B cell (primary cell): ENCODE measurements at regions of chr18 and their contacts with region 1.

Region 1: GRCh38 chr18:74342416-74343043 is 26.9 kb downstream of the C18orf63 start:
- DNase-seq: peak; percentile 72
- ATAC-seq: no peak
- H3K4me3 ChIP-seq: no peak overlapping the region
- H3K4me3 Mint-ChIP-seq: no peak overlapping the region
- H3K27ac ChIP-seq: no peak overlapping the region
- H3K27ac Mint-ChIP-seq: peak overlapping the region; percentile 64
- H3K4me1 ChIP-seq: peaks cover 0 to 8% of the 10 kb centered on the region in 2 donors
- H3K4me1 Mint-ChIP-seq: peaks cover 22% of the 10 kb centered on the region
- H3K27me3 ChIP-seq: no peaks in the 10 kb centered on the region
- H3K27me3 Mint-ChIP-seq: no peaks in the 10 kb centered on the region
- CTCF ChIP-seq: peak; percentile 93

Region 2: DNA sequence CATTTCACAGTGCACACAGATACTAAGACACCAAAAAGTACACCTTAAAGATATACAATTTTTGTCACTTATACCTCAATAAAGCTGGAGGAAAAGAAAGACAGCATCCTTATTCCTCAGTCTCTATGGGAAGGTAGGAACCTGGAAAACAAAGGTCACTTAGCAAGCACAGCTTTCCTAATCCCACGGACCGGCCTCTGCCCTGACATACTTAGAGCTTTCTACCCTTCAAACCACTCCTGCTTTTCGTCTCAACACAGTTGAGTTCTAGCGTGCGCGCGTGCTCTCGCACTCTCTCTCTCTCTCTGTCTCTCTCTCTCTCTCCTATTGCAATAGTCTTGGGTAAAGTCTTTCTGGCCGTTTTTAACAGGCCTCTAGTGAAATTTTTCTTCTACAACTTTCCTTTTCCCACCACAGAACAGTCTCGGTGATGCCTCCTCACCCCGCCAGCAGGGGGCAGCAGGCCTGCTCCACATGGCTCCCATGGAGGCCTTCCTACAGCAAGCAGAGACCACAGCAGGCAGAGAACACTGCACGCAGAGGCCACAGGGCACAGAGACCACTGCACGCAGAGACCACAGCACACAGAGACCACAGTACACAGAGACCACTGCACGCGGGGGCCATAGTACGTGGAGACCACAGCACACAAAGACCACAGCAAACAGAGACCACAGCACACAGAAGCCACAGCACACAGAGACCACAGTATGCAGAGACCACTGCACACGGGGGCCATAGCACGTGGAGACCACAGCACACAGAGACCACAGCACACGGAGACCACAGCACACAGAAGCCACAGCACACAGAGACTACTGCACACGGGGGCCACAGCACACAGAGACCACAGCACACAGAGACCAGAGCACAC is 301.8 kb before region 1 on chr18:
- CTCF ChIA-PET with region 1: interaction called, 11 read pairs
- POLR2A ChIA-PET with region 1: no interaction called
- intact Hi-C with region 1: loop called (anchors 1 kb)
- DNase-seq: peak; percentile 62
- ATAC-seq: peak; percentile 79
- H3K4me3 ChIP-seq: no peak overlapping the region
- H3K4me3 Mint-ChIP-seq: no peak overlapping the region
- H3K27ac ChIP-seq: no peak overlapping the region
- H3K27ac Mint-ChIP-seq: no peak overlapping the region
- H3K4me1 ChIP-seq: peaks cover 18% of the 10 kb centered on the region in 2 donors
- H3K4me1 Mint-ChIP-seq: peaks cover 20% of the 10 kb centered on the region
- H3K27me3 ChIP-seq: no peaks in the 10 kb centered on the region
- H3K27me3 Mint-ChIP-seq: no peaks in the 10 kb centered on the region
- CTCF ChIP-seq: peak; percentile 66

Region 3: DNA sequence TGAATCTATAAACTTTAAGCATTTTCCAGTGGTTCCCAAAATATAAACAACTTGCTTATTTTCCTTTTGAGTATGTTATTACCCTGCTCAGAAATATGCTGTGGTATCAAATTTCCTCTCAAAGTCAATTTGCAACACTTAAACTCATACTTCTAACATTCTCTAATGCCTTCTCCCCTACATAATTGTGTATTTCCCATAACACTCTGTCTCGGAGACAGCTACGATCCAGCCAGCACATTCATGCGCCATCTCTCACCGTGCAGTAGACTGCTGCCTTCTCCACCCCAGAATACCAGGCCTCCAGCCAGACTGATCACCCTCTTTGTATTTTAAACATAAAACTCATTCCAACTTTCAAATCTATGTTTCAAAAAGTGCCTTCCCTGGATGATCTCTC is 152.4 kb before region 1 on chr18:
- CTCF ChIA-PET with region 1: interaction called, 47 read pairs
- POLR2A ChIA-PET with region 1: no interaction called
- intact Hi-C with region 1: no loop called
- DNase-seq: no peak
- ATAC-seq: no peak
- H3K4me3 ChIP-seq: no peak overlapping the region
- H3K4me3 Mint-ChIP-seq: no peak overlapping the region
- H3K27ac ChIP-seq: no peak overlapping the region
- H3K27ac Mint-ChIP-seq: no peak overlapping the region
- H3K4me1 ChIP-seq: no peaks in the 10 kb centered on the region
- H3K4me1 Mint-ChIP-seq: no peaks in the 10 kb centered on the region
- H3K27me3 ChIP-seq: peaks cover 0 to 15% (median 2%) of the 10 kb centered on the region in 4 experiments
- H3K27me3 Mint-ChIP-seq: peaks cover 42% of the 10 kb centered on the region
- CTCF ChIP-seq: no peak

Region 4: DNA sequence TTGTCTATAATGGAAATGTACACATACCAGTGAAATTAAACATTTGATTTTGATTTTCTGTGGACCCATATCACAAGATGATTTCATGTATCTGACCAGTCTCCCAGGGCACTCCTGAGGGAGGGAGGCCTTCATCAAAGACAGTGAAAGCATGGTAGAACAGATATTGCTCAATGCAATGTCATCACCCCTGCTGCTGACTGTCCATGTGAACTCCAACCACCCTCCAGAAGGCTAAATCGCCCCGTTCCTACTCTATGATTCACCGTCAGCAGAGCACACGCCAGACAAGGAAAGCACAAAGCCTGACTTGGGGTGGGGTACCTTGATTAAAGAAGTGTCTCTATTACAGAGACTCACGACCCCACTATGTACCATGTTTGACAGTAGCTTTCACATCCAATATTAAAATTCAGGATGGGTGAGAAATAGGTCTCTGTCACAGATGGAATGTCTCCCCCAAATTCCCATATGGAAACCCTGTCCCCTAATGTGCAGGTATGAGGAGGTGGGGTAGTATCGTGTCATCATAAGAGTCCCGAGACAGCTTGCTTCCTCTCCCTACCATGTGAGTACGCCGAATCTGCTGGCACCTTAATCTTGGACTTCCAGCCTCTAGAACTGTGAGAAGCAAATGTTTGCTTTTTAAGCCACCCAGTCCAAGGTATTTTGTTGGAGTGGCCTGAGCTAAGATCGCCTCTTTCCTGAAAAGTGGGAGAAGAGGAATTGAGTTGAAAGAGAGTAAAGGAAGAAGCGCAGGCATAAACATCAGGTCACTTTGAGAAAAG is 93.2 kb before region 1 on chr18:
- CTCF ChIA-PET with region 1: interaction called, 12 read pairs
- POLR2A ChIA-PET with region 1: no interaction called
- intact Hi-C with region 1: no loop called
- DNase-seq: no peak
- ATAC-seq: no peak
- H3K4me3 ChIP-seq: peak overlapping the region in 1 of 5 experiments; percentile 8
- H3K4me3 Mint-ChIP-seq: peak overlapping the region; percentile 27
- H3K27ac ChIP-seq: peak overlapping the region; percentile 53 to 80
- H3K27ac Mint-ChIP-seq: peak overlapping the region; percentile 80
- H3K4me1 ChIP-seq: peaks cover 0 to 36% of the 10 kb centered on the region in 2 donors
- H3K4me1 Mint-ChIP-seq: peaks cover 38% of the 10 kb centered on the region
- H3K27me3 ChIP-seq: no peaks in the 10 kb centered on the region
- H3K27me3 Mint-ChIP-seq: no peaks in the 10 kb centered on the region
- CTCF ChIP-seq: no peak

Region 5: GRCh38 chr18:74328206-74328605 is 14.3 kb before region 1 on chr18:
- CTCF ChIA-PET with region 1: interaction called, 10 read pairs
- POLR2A ChIA-PET with region 1: no interaction called
- intact Hi-C with region 1: no loop called
- DNase-seq: no peak
- ATAC-seq: no peak
- H3K4me3 ChIP-seq: no peak overlapping the region
- H3K4me3 Mint-ChIP-seq: no peak overlapping the region
- H3K27ac ChIP-seq: no peak overlapping the region
- H3K27ac Mint-ChIP-seq: no peak overlapping the region
- H3K4me1 ChIP-seq: peaks cover 4 to 6% of the 10 kb centered on the region in 2 donors
- H3K4me1 Mint-ChIP-seq: peaks cover 15% of the 10 kb centered on the region
- H3K27me3 ChIP-seq: no peaks in the 10 kb centered on the region
- H3K27me3 Mint-ChIP-seq: peaks cover 11% of the 10 kb centered on the region
- CTCF ChIP-seq: no peak

Region 6: DNA sequence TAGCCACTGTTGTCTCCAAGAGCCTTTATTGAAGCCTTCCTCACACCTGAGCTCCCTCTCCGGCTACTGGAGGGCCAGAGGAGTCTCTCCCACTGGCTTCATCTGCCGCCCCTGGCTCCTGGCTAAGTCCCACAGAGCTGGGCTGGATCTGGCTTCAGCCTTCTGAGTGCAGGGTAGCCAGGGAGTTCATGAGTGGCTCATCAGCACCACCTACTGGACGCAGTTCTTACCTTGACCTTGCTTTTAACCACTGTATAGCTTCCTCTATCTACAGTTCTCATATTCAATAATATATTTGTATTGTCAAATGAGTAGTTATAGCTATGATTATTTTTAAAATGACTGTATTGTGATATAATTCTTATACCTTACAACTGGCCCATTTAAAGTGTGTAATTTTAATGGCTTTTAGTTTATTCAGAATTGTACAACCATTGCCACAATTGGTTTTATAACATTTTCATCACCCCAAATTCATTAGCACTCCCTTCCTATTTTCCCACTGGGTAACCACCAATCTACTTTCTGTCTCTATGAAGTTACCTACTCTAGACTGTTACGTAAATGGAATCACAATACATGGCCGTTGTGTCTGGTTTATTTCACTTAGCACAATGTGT is 209.5 kb after region 1 on chr18:
- CTCF ChIA-PET with region 1: interaction called, 24 read pairs
- POLR2A ChIA-PET with region 1: no interaction called
- intact Hi-C with region 1: no loop called
- DNase-seq: peak; percentile 81
- ATAC-seq: peak; percentile 96
- H3K4me3 ChIP-seq: no peak overlapping the region
- H3K4me3 Mint-ChIP-seq: no peak overlapping the region
- H3K27ac ChIP-seq: no peak overlapping the region
- H3K27ac Mint-ChIP-seq: no peak overlapping the region
- H3K4me1 ChIP-seq: no peaks in the 10 kb centered on the region
- H3K4me1 Mint-ChIP-seq: no peaks in the 10 kb centered on the region
- H3K27me3 ChIP-seq: no peaks in the 10 kb centered on the region
- H3K27me3 Mint-ChIP-seq: peaks cover 14% of the 10 kb centered on the region
- CTCF ChIP-seq: peak; percentile 92